AG04450 (cell line): ENCODE measurements at regions of chr1 and their contacts with region 1.

Region 1: DNA sequence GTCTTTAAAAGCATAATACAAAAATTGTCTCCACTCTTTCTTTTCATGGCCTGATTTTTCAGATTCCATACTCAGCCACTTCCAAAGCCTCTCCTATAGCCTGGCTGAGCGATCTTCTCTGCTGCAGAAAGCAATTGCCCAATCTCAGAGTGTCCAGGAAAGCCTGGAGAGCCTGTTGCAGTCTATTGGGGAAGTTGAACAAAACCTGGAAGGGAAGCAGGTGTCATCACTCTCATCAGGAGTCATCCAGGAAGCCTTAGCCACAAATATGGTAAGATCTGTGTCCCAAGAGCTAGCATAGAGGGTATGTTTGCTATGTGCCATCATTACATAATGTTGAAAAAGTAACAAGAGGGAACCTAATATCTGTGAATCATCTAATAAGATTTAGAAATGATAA is 130.7 kb upstream of the BMP8A start:
- DNase-seq: no peak
- H3K4me3 ChIP-seq: no peak overlapping the region
- H3K27ac ChIP-seq: no peak overlapping the region
- H3K27me3 ChIP-seq: no peaks in the 10 kb centered on the region
- CTCF ChIP-seq: no peak

Region 2: GRCh38 chr1:39293375-39294070 is 67.2 kb before region 1 on chr1:
- CTCF ChIA-PET with region 1: no interaction called
- POLR2A ChIA-PET with region 1: interaction called, 10 read pairs
- DNase-seq: no peak
- H3K4me3 ChIP-seq: no peak overlapping the region
- H3K27ac ChIP-seq: no peak overlapping the region
- H3K27me3 ChIP-seq: no peaks in the 10 kb centered on the region
- CTCF ChIP-seq: no peak

Region 3: GRCh38 chr1:39566441-39567137 is 205.9 kb after region 1 on chr1:
- CTCF ChIA-PET with region 1: no interaction called
- POLR2A ChIA-PET with region 1: no interaction called
- DNase-seq: no peak
- H3K4me3 ChIP-seq: no peak overlapping the region
- H3K27ac ChIP-seq: no peak overlapping the region
- H3K27me3 ChIP-seq: no peaks in the 10 kb centered on the region
- CTCF ChIP-seq: no peak